ENCODE measurements at regions of chr3 and their contacts with region 1.

Region 1: GRCh38 chr3:126389112-126389793 is 5.5 kb upstream of the CFAP100 start:
- DNase-seq: peak; percentile 28 to 53
- ATAC-seq: peak; percentile 61 to 87 (median 65)
- H3K4me3 ChIP-seq: no peak overlapping the region
- H3K4me3 Mint-ChIP-seq: no peak overlapping the region
- H3K27ac ChIP-seq: no peak overlapping the region
- H3K27ac Mint-ChIP-seq: no peak overlapping the region
- H3K4me1 ChIP-seq: peaks cover 4% of the 10 kb centered on the region
- H3K4me1 Mint-ChIP-seq: peaks cover 0 to 7% of the 10 kb centered on the region in 2 donors
- H3K27me3 ChIP-seq: no peaks in the 10 kb centered on the region
- H3K27me3 Mint-ChIP-seq: peaks cover 43% of the 10 kb centered on the region in 2 donors
- CTCF ChIP-seq: peak; percentile 46

Region 2: DNA sequence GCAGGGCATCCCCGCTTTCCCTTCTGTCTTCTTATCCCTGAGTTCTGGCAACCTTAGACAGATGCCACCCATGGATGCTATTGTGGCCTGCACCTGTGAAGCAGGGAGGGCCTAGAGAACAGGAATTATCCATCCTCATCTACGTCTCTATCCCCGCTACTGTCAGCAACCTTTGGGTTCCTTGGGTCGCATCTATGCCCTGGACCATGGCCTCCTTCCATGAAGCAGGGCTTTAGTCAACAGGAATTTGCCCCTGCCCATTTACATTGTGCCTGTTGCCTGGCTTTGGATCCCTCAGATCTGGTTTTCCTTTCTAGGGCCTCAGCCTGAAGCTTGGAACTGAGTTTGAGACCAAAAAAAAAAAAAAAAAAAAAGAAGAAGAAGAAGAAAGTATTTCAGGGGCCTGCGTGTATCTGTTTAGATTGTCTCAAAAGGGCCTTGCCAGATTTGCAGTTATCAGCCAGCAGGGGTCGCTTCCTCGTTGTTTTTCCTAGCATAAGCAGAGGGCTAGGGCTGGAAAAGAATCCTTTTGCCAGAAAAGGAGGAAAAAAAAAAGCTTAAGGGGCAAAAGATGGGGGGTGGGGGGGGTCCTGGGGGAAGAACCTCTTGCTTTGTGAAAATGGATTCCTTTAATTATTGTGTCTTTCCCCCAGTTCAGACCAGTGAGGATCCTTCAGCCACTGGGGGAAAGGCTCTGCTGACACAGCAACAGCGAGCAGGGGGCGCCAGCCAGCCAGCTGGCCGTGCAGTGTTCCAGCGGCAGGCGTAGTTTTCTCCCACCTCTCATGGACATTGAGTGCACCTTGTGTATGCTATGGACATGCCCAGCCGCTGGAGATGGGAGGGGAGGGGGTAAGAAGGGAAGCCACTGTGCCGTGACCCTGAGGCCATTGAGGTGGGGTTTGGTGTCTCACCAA is 143.2 kb before region 1 on chr3:
- intact Hi-C with region 1: loop called (anchors 1 kb)
- DNase-seq: peak in 1 of 2 donors; percentile 37
- ATAC-seq: no peak
- H3K4me3 ChIP-seq: no peak overlapping the region
- H3K4me3 Mint-ChIP-seq: no peak overlapping the region
- H3K27ac ChIP-seq: no peak overlapping the region
- H3K27ac Mint-ChIP-seq: no peak overlapping the region
- H3K4me1 ChIP-seq: no peaks in the 10 kb centered on the region
- H3K4me1 Mint-ChIP-seq: no peaks in the 10 kb centered on the region
- H3K27me3 ChIP-seq: no peaks in the 10 kb centered on the region
- H3K27me3 Mint-ChIP-seq: peaks cover 21 to 23% of the 10 kb centered on the region in 2 donors
- CTCF ChIP-seq: peak; percentile 31

Measured in natural killer cell (primary cell).